GM10248 (cell line): ENCODE measurements at regions of chr2 and their contacts with region 1.

Region 1: DNA sequence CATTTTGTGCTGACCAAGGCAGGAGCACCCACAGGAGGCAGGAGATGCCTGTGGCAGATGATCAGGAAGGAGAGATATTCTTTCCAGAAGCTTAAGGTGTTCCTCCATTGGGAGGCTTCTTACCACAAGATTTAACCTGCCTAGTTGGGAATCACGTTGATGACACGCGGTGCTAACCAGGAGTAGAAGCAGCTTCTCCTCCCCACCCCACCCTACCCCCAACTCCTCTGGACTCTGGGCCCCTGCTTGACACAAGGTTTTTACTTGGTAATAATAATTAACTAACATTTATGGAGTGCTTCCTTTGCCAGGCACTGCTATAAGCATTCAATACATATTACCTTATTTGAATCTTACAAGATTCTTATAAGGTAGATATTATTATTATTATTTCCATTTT is 62.5 kb upstream of the PAPOLG start:
- DNase-seq: no peak
- CTCF ChIP-seq: no peak

Region 2: DNA sequence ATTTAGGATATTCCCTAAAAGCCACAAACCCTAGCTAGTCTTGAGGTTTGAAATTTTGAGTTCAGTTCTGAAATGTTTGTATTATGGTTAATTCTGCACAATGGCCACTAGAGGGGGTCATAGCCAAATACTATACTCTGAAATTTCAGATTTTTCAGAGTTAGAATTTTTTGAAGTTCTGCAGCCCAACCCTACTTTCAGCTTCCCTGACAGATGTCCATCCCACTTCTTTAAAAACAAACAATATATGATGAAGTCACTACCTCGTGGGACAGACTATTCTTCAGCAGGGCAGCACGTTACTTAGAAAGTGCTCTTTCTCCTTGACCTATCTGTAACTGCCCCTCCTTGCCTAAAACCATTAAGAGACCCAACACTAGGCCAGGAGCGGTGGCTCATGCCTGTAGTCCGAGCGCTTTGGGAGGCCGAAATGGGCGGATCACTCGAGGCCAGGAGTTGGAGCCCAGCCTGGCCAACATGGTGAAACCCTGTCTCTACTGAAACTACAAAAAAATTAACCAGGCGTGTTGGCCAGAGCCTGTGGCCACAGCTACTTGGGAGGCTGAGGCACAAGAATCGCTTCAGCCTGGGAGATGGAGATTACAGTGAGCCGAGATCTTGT is 14.3 kb after region 1 on chr2:
- CTCF ChIA-PET with region 1: interaction called, 31 read pairs
- POLR2A ChIA-PET with region 1: no interaction called
- DNase-seq: peak; percentile 66
- CTCF ChIP-seq: peak; percentile 54